CD4-positive, alpha-beta memory T cell (primary cell): ENCODE measurements at regions of chr3 and their contacts with region 1.

Region 1: DNA sequence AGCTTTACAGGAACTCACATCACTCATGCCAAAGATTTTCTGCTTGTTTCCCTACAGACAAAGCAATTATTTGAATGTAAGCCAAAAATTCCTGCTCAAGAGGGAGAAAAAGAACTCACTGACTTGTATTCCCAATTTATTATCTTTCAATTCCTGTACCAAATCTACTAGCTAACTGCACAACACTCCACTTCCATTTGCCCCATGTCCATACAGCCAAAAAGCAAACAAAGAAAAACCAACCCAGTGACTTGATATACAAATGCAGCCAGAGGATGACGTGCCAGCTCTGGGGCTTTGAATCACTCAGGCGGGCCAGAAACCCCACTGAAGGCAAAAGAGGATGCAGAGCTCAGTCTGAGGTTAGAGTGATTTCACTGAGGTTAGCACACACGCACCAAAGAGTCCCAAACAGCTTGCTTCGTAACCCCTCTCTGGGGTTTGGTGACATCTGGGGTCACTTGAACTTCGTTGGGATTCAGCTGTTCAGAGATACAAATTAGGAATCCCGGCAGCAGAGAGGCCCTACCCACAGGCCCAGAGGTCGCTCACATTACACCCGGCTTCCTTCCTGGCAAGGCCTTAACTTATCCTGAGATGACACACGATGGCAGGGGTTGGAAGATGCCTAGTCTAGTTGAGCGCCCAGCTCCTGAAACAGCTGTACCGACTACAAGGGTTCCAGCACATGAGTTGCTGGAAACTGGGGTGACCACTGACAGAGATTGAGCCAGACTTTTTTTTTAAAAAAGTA is 1.6 kb downstream of the RFTN1 start:
- DNase-seq: peak; percentile 81 to 92 (median 85)
- H3K4me3 ChIP-seq: peak overlapping the region; percentile 70 to 80
- H3K4me3 Mint-ChIP-seq: peak overlapping the region; percentile 91 to 98 (median 96)
- H3K27ac ChIP-seq: peak overlapping the region; percentile 73
- H3K27ac Mint-ChIP-seq: peak overlapping the region; percentile 93 to 98 (median 96)
- H3K4me1 ChIP-seq: peaks cover 86% of the 10 kb centered on the region
- H3K4me1 Mint-ChIP-seq: peaks cover 57 to 89% (median 73%) of the 10 kb centered on the region in 4 donors
- H3K27me3 ChIP-seq: no peaks in the 10 kb centered on the region
- H3K27me3 Mint-ChIP-seq: no peaks in the 10 kb centered on the region

Region 2: DNA sequence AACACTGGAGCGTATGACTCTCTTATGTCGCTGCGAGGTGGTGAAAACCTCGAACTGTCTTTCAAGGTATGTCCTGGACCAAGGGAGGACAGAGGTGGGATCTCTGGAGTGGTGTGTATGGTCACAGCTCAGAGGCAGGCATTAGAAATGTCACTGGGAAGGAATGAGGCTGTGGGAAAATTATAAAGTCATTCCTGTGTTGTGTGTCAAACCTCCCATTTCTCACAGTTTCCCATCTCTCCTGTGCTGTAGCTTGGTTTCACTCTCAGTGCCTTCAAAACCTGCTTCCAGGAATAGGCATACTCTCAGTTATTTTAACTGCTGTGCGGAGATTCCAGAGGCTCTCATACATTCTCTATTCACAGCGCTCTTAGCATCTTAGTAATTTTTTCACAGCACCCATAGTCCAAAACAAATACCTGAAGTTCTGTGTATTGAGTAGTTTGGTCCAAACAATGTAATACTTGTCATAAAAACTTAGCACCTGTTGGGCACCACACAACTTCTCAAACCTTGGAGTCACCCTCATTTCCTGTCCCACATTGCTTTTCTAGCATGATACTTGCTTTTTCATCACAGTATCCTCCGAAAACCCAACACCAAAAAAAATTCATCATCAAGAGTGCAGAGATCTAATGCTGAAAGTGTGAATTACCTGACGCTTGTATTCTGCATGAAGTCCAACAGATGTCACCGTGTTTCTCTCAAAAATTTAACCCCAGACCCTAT is 300.5 kb before region 1 on chr3:
- CTCF ChIA-PET with region 1: no interaction called
- POLR2A ChIA-PET with region 1: no interaction called
- intact Hi-C with region 1: no loop called
- DNase-seq: no peak
- H3K4me3 ChIP-seq: no peak overlapping the region
- H3K4me3 Mint-ChIP-seq: no peak overlapping the region
- H3K27ac ChIP-seq: no peak overlapping the region
- H3K27ac Mint-ChIP-seq: no peak overlapping the region
- H3K4me1 ChIP-seq: no peaks in the 10 kb centered on the region
- H3K4me1 Mint-ChIP-seq: no peaks in the 10 kb centered on the region
- H3K27me3 ChIP-seq: no peaks in the 10 kb centered on the region
- H3K27me3 Mint-ChIP-seq: peaks cover 4% of the 10 kb centered on the region in 2 donors

Region 3: GRCh38 chr3:16300881-16301359 is 210.9 kb before region 1 on chr3:
- CTCF ChIA-PET with region 1: interaction called, 5 read pairs
- POLR2A ChIA-PET with region 1: interaction called, 32 read pairs
- intact Hi-C with region 1: no loop called
- DNase-seq: peak; percentile 76 to 81 (median 77)
- H3K4me3 ChIP-seq: peak overlapping the region in 1 of 2 donors; percentile 50
- H3K4me3 Mint-ChIP-seq: peak overlapping the region; percentile 89 to 96 (median 90)
- H3K27ac ChIP-seq: peak overlapping the region; percentile 49
- H3K27ac Mint-ChIP-seq: peak overlapping the region; percentile 93 to 98 (median 96)
- H3K4me1 ChIP-seq: peaks cover 95% of the 10 kb centered on the region
- H3K4me1 Mint-ChIP-seq: peaks cover 81 to 99% (median 92%) of the 10 kb centered on the region in 4 donors
- H3K27me3 ChIP-seq: no peaks in the 10 kb centered on the region
- H3K27me3 Mint-ChIP-seq: no peaks in the 10 kb centered on the region

Region 4: GRCh38 chr3:16377847-16378302 is 134.0 kb before region 1 on chr3:
- CTCF ChIA-PET with region 1: no interaction called
- POLR2A ChIA-PET with region 1: interaction called, 5 read pairs
- intact Hi-C with region 1: loop called (anchors 2 kb)
- DNase-seq: no peak
- H3K4me3 ChIP-seq: peak overlapping the region in 1 of 2 donors; percentile 13
- H3K4me3 Mint-ChIP-seq: peak overlapping the region in 7 of 8 donors; percentile 38 to 71 (median 55)
- H3K27ac ChIP-seq: no peak overlapping the region
- H3K27ac Mint-ChIP-seq: peak overlapping the region; percentile 78 to 90 (median 84)
- H3K4me1 ChIP-seq: peaks cover 62% of the 10 kb centered on the region
- H3K4me1 Mint-ChIP-seq: peaks cover 43 to 79% (median 59%) of the 10 kb centered on the region in 4 donors
- H3K27me3 ChIP-seq: no peaks in the 10 kb centered on the region
- H3K27me3 Mint-ChIP-seq: no peaks in the 10 kb centered on the region

Region 5: GRCh38 chr3:16476641-16477455 is 35.0 kb before region 1 on chr3:
- CTCF ChIA-PET with region 1: interaction called, 26 read pairs
- POLR2A ChIA-PET with region 1: interaction called, 51 read pairs
- intact Hi-C with region 1: loop called (anchors 1 kb)
- DNase-seq: peak; percentile 20 to 47 (median 39)
- H3K4me3 ChIP-seq: no peak overlapping the region
- H3K4me3 Mint-ChIP-seq: peak overlapping the region in 7 of 8 donors; percentile 20 to 75 (median 61)
- H3K27ac ChIP-seq: peak overlapping the region; percentile 3
- H3K27ac Mint-ChIP-seq: peak overlapping the region; percentile 43 to 94 (median 74)
- H3K4me1 ChIP-seq: peaks cover 51% of the 10 kb centered on the region
- H3K4me1 Mint-ChIP-seq: peaks cover 34 to 78% (median 55%) of the 10 kb centered on the region in 4 donors
- H3K27me3 ChIP-seq: no peaks in the 10 kb centered on the region
- H3K27me3 Mint-ChIP-seq: no peaks in the 10 kb centered on the region

Region 6: GRCh38 chr3:16496408-16497222 is 15.2 kb before region 1 on chr3:
- CTCF ChIA-PET with region 1: interaction called, 6 read pairs
- POLR2A ChIA-PET with region 1: interaction called, 31 read pairs
- intact Hi-C with region 1: loop called (anchors 2 kb)
- DNase-seq: no peak
- H3K4me3 ChIP-seq: no peak overlapping the region
- H3K4me3 Mint-ChIP-seq: peak overlapping the region in 7 of 8 donors; percentile 5 to 80 (median 37)
- H3K27ac ChIP-seq: no peak overlapping the region
- H3K27ac Mint-ChIP-seq: peak overlapping the region; percentile 39 to 88 (median 62)
- H3K4me1 ChIP-seq: peaks cover 49% of the 10 kb centered on the region
- H3K4me1 Mint-ChIP-seq: peaks cover 51 to 70% (median 54%) of the 10 kb centered on the region in 4 donors
- H3K27me3 ChIP-seq: no peaks in the 10 kb centered on the region
- H3K27me3 Mint-ChIP-seq: no peaks in the 10 kb centered on the region

Region 7: GRCh38 chr3:16697443-16698147 is 185.7 kb after region 1 on chr3:
- CTCF ChIA-PET with region 1: no interaction called
- POLR2A ChIA-PET with region 1: no interaction called
- intact Hi-C with region 1: no loop called
- DNase-seq: no peak
- H3K4me3 ChIP-seq: no peak overlapping the region
- H3K4me3 Mint-ChIP-seq: no peak overlapping the region
- H3K27ac ChIP-seq: no peak overlapping the region
- H3K27ac Mint-ChIP-seq: no peak overlapping the region
- H3K4me1 ChIP-seq: no peaks in the 10 kb centered on the region
- H3K4me1 Mint-ChIP-seq: no peaks in the 10 kb centered on the region
- H3K27me3 ChIP-seq: no peaks in the 10 kb centered on the region
- H3K27me3 Mint-ChIP-seq: peaks cover 0 to 3% of the 10 kb centered on the region in 2 donors